PC-3 (cell line): ENCODE measurements at regions of chr12 and their contacts with region 1.

Region 1: DNA sequence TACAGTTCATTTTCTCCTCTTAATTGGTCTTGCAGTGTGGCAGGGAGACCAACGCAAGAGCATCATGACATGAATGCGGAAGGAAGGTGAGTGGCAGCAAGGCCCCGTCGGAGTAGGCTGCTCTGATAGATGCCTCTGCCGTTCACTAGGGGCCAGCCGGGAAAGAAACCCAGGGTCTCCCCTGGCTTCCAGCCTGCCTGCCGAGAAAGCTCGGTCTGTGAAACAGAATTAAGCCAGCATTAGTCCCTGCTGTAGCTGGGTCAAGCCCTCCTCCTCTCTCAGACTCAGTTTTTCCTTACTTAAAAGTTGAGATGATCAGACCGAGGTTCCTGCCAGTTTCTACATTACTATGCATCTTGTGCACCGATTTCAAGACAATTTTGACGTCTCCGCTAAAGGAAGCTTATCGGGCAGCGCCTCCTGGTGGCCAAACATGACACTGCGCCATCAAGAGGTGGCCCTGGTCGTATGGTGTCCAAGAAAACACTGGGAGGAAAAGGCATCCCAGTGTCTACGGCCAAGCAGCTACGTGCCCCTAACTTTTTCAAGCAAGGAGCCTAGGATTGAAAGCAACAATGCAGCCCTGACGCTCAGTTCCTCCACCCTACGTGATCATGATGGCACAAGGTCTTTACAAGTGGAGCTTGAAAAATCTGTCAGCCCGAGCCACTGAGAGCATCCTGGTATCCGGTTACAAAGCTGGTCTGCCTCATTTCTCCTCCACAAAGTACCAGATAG is 131.6 kb downstream of the KSR2 start:
- DNase-seq: peak; percentile 95
- ATAC-seq: peak; percentile 38
- H3K4me3 ChIP-seq: no peak overlapping the region
- H3K27ac ChIP-seq: no peak overlapping the region
- H3K4me1 ChIP-seq: peaks cover 23% of the 10 kb centered on the region
- H3K27me3 ChIP-seq: no peaks in the 10 kb centered on the region
- CTCF ChIP-seq: peak; percentile 100

Region 2: DNA sequence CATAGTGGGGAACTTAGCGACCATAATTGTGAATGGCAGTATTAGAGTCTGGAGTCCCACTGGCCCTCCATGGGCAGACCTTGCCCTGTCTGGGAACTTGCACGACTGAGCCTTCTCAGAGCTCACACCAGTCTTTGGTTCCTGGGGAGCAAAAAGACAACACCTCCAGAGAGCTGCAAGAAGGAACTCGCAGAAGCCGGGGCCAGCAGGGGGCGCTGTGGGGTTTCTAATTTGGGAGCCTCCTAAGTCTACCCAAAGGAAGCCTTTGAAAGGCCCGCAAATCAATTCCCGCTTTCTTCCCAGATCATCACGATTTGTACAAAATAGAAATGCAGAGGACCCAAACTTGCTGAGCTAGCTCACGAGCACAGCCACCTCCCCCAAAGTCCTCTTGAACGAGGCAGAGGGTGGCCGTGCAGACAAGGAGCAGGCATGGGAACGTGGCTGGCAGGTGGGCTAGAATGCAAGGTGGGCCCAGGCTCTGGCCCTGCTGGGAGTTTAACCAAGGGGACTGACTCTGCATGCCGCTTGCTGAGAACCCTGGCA is 600.6 kb before region 1 on chr12:
- CTCF ChIA-PET with region 1: no interaction called
- POLR2A ChIA-PET with region 1: no interaction called
- intact Hi-C with region 1: loop called (anchors 2 kb)
- DNase-seq: peak; percentile 89
- ATAC-seq: peak; percentile 97
- H3K4me3 ChIP-seq: no peak overlapping the region
- H3K27ac ChIP-seq: no peak overlapping the region
- H3K4me1 ChIP-seq: no peaks in the 10 kb centered on the region
- H3K27me3 ChIP-seq: peaks cover 15% of the 10 kb centered on the region; the same call in 1 of the 2 replicates
- CTCF ChIP-seq: peak; percentile 97

Region 3: DNA sequence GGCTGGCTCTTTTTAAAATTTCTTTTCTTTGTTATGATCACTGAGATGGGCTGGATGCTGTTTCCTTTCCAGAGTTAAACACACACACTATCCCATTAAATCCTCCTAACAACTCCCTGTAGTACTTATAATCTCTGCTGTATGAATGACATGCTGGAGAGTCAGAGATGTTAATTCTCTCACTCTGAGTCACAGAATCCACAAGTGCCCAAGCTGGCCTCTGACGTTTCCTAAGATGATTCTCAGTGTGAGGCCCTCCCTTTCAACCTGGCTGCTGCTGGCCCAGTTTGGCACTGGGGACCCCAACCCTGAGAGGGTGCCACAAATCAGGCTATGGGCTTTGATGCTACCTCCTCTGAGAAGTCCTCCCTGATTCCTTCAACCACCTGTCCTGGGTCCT is 481.1 kb before region 1 on chr12:
- CTCF ChIA-PET with region 1: no interaction called
- POLR2A ChIA-PET with region 1: no interaction called
- intact Hi-C with region 1: no loop called
- DNase-seq: peak; percentile 89
- ATAC-seq: peak; percentile 98
- H3K4me3 ChIP-seq: no peak overlapping the region
- H3K27ac ChIP-seq: no peak overlapping the region
- H3K4me1 ChIP-seq: peaks cover 9% of the 10 kb centered on the region
- H3K27me3 ChIP-seq: peaks cover 19% of the 10 kb centered on the region
- CTCF ChIP-seq: no peak

Region 4: GRCh38 chr12:117486840-117487659 is 350.1 kb before region 1 on chr12:
- CTCF ChIA-PET with region 1: no interaction called
- POLR2A ChIA-PET with region 1: no interaction called
- intact Hi-C with region 1: loop called (anchors 2 kb)
- DNase-seq: peak; percentile 97
- ATAC-seq: peak; percentile 94
- H3K4me3 ChIP-seq: no peak overlapping the region; the same call in 1 of the 2 replicates
- H3K27ac ChIP-seq: peak overlapping the region; percentile 78
- H3K4me1 ChIP-seq: peaks cover 26% of the 10 kb centered on the region
- H3K27me3 ChIP-seq: no peaks in the 10 kb centered on the region
- CTCF ChIP-seq: no peak

Region 5: GRCh38 chr12:117649796-117650195 is 187.4 kb before region 1 on chr12:
- CTCF ChIA-PET with region 1: no interaction called
- POLR2A ChIA-PET with region 1: no interaction called
- intact Hi-C with region 1: no loop called
- DNase-seq: no peak
- ATAC-seq: no peak
- H3K4me3 ChIP-seq: no peak overlapping the region
- H3K27ac ChIP-seq: no peak overlapping the region
- H3K4me1 ChIP-seq: no peaks in the 10 kb centered on the region
- H3K27me3 ChIP-seq: no peaks in the 10 kb centered on the region
- CTCF ChIP-seq: no peak

Region 6: DNA sequence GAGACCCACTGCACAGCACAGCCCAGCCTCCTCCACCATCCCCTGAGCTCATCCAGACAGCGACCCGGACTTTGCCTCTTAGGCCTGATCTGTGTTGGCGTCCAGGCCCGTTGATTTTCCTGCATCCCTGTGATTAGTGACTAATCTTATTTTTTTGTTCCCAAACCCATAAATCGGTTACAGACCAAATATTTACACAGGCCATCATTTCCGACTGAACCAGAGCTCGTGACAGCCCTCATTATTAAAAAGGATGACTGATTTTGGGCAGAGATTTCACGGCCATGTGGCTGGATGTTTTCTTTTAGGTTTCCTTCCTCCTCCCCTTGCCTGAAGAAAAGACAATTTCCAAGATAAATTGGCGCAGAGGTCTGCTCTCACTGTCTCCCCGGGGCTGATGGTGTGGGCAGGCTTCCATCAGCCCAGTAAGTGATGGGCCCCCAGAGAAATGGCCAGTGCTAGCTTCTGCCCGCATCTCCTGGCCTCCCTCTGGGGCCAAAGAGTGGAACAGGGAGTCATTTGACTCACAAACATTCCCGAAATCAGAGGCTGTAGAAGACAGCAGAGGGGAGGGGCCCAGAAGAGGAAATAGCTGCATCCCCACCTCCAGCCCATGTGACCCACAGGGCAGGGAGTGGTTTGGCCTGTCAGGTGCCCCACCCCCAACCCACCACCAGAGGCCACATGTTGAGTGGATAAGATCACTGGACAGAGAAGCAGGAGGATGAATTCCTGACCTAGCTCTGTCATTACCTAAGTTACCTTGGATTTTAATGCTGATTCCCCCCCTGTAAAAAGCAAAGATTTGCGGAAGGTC is 151.8 kb before region 1 on chr12:
- CTCF ChIA-PET with region 1: interaction called, 4 read pairs
- POLR2A ChIA-PET with region 1: interaction called, 8 read pairs
- intact Hi-C with region 1: loop called (anchors 1 kb)
- DNase-seq: peak; percentile 96
- ATAC-seq: peak; percentile 67
- H3K4me3 ChIP-seq: peak overlapping the region; percentile 55
- H3K27ac ChIP-seq: peak overlapping the region; percentile 98
- H3K4me1 ChIP-seq: peaks cover 57% of the 10 kb centered on the region
- H3K27me3 ChIP-seq: no peaks in the 10 kb centered on the region
- CTCF ChIP-seq: no peak

Region 7: DNA sequence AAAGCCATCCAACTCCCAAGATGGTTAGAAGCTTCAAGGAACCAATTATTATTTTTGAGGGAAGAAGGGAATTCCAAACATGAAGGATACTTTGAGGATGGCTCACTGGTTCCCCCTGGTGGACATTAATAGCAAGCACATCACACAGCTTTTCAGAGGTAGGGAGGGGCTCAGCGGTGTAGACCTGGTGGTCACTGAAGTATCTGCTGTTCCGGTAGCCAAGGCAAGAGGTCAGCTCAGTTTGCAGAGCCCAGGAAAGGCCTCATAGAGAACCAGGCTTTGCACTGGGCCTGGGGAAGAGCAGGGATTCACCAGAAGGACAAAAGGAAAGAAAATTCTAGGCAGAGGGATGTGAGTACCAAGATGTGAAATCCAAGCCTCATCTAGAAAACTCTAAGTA is 12.9 kb after region 1 on chr12:
- CTCF ChIA-PET with region 1: interaction called, 6 read pairs
- POLR2A ChIA-PET with region 1: interaction called, 4 read pairs
- intact Hi-C with region 1: loop called (anchors 1 kb)
- DNase-seq: peak; percentile 80
- ATAC-seq: peak; percentile 35
- H3K4me3 ChIP-seq: no peak overlapping the region
- H3K27ac ChIP-seq: no peak overlapping the region
- H3K4me1 ChIP-seq: peaks cover 21% of the 10 kb centered on the region
- H3K27me3 ChIP-seq: no peaks in the 10 kb centered on the region
- CTCF ChIP-seq: peak; percentile 97

Region 8: DNA sequence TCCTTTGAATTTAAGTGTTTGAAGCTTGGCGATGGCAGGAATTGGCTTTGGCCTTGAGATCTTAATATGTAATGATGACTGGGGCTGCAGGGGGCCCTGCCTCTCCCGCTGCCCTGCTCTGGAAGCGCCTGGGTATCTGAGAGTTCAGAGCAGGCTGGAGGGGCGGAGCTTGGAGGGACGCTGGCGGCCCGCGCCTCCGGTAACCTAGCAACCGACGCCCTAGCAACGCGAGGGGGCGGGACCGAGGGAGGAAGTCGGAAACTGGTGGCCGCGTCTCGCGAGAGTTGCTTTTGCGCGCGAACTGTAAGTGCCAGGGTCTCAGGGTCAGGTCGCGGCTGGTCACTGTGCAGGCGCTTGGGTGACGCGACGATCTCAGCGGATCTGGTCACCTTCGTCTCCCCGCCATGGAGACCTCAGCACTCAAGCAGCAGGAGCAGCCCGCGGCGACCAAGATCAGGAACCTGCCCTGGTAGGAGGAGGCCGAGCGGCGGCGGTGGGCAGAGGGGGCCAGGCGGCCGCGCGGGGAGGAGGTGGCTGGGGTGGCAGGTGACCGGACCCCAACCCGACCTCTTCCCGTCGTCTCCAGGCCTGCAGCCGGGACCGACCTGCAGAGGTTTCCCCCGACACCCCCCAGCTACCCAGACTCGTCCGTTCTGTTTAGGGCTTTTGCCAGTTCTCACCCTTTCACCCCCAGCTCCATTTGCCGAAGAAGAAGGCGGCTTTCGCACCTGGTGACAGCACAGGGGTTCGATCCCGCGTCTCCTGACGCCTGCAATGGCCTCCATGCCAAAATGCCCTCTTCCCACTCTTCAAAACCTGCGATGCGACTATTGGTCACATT is 179.5 kb after region 1 on chr12 and contains the start of gene RFC5:
- CTCF ChIA-PET with region 1: no interaction called
- POLR2A ChIA-PET with region 1: no interaction called
- intact Hi-C with region 1: no loop called
- DNase-seq: peak; percentile 99
- ATAC-seq: peak; percentile 99
- H3K4me3 ChIP-seq: peak within 1 kb of the TSS; percentile 95
- H3K27ac ChIP-seq: peak within 1 kb of the TSS; percentile 17
- H3K4me1 ChIP-seq: peaks cover 18% of the 10 kb centered on the region
- H3K27me3 ChIP-seq: no peaks in the 10 kb centered on the region
- CTCF ChIP-seq: no peak
- total RNA-seq, gene RFC5: 86.4 and 100 TPM in 2 replicates

Region 9: GRCh38 chr12:118900993-118901392 is 1063.8 kb after region 1 on chr12:
- CTCF ChIA-PET with region 1: no interaction called
- POLR2A ChIA-PET with region 1: no interaction called
- intact Hi-C with region 1: no loop called
- DNase-seq: no peak
- ATAC-seq: no peak
- H3K4me3 ChIP-seq: no peak overlapping the region
- H3K27ac ChIP-seq: no peak overlapping the region
- H3K4me1 ChIP-seq: no peaks in the 10 kb centered on the region
- H3K27me3 ChIP-seq: peaks cover 26% of the 10 kb centered on the region; the same call in 1 of the 2 replicates
- CTCF ChIP-seq: no peak